Mammary epithelial cell (primary cell): ENCODE measurements at regions of chr10 and their contacts with region 1.

Region 1: DNA sequence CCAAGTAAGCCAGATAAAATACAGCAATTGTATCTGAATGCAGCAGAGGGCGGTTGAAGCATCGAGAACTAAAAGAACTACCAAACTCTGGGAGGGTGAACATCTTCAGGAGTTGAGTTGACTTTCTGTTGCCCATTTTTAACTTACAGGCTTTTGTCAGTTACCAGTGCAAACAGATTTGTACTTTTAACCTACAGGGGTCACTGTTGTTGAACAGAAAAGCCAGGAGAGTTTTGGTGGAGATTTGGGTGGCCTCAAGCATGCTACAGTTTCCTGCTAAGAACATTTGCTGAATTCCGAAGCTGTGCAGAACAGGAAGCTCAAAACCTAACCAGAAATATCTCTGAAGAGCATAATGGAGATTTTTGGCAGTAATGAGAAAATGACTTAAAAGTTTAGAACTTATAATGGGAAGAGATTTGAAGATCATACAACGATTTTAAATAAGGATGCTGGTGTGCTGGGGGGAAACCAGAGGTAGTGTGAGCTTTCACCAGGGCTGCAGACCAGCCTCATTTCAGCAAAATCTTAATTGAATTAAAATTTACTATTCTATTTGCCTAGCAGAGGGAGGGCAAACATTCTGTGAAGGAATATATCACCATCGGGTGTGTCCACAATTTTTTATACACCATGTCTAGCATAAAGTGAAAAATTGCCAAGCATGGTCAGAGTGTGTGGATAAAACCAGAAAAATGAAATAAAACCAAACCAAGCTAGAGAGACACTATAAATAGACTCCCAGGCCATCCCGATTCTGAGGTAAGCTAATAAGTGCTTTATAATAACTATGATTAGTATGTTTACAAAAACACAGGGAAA is 208.6 kb upstream of the CCDC6 start:
- DNase-seq: peak; percentile 55
- H3K4me3 ChIP-seq: no peak overlapping the region
- H3K27ac ChIP-seq: no peak overlapping the region
- H3K4me1 ChIP-seq: no peaks in the 10 kb centered on the region
- H3K27me3 ChIP-seq: no peaks in the 10 kb centered on the region
- CTCF ChIP-seq: peak; percentile 61 to 70

Region 2: DNA sequence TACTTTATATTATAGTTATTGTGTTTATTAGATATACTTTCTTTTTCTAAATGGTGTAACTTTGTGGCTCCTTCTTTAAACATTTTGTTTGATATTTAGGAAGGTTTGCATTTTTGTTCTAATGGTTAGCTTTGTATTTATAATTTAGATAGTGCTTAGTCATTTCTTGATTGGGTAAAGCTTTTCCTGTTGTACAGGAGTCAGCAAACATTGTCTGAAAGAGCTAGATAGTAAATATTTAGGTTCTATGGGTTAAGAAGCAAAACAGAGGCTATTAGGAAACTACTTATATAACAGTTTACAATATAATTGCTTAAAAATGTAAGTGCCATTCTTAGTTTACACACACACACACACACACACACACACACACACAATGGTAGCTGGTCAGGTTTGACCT is 138.1 kb before region 1 on chr10:
- CTCF ChIA-PET with region 1: no interaction called
- dilution Hi-C with region 1: no loop called
- in situ Hi-C with region 1: no loop called
- intact Hi-C with region 1: no loop called
- DNase-seq: no peak
- H3K4me3 ChIP-seq: no peak overlapping the region
- H3K27ac ChIP-seq: no peak overlapping the region
- H3K4me1 ChIP-seq: peaks cover 6% of the 10 kb centered on the region
- H3K27me3 ChIP-seq: no peaks in the 10 kb centered on the region
- CTCF ChIP-seq: no peak

Region 3: DNA sequence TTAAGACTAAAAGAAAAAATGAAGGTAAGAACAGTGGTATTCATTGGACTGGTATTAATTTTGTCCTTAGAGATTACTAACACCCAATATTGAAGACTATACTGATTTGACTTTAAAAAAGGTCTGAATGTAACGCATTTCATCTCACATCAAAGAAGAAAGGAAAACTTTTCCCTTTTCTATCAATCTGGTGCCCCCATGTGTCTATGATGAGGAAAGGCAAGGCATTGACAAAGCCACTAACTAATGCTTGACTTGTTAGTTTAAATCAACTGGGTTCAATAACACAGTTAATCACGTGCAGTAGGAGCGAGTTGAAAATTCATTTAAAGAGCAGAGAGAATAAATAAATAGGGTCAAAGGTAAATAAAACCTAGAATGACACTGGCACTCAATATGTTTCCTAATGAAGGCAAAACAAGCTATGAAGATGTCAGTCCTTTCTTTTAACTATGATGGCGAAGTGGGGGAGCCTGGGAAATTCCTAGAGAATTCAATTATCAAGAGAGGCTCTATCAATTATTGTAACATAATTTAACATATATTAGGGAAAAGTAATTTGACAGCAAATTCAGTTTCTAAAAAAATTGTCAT is 93.8 kb after region 1 on chr10:
- CTCF ChIA-PET with region 1: interaction called, 3 read pairs
- dilution Hi-C with region 1: no loop called
- in situ Hi-C with region 1: loop called (anchors 5 kb)
- intact Hi-C with region 1: loop called (anchors 1 kb)
- DNase-seq: peak; percentile 21
- H3K4me3 ChIP-seq: no peak overlapping the region
- H3K27ac ChIP-seq: no peak overlapping the region
- H3K4me1 ChIP-seq: peaks cover 3% of the 10 kb centered on the region
- H3K27me3 ChIP-seq: no peaks in the 10 kb centered on the region
- CTCF ChIP-seq: peak; percentile 79 to 81

Region 4: GRCh38 chr10:60662917-60663614 is 548.1 kb after region 1 on chr10:
- CTCF ChIA-PET with region 1: no interaction called
- dilution Hi-C with region 1: no loop called
- in situ Hi-C with region 1: loop called in 1 of 2 experiments (anchors 25 kb)
- intact Hi-C with region 1: no loop called
- DNase-seq: peak; percentile 18
- H3K4me3 ChIP-seq: no peak overlapping the region
- H3K27ac ChIP-seq: no peak overlapping the region
- H3K4me1 ChIP-seq: peaks cover 4% of the 10 kb centered on the region
- H3K27me3 ChIP-seq: no peaks in the 10 kb centered on the region
- CTCF ChIP-seq: no peak